Activated naive CD8-positive, alpha-beta T cell treated with anti-CD3 and anti-CD28 coated beads, Interleukin-2, amount 10 ng/mL, durations not matched to agents 7 days and 5 days (primary cell): ENCODE measurements at regions of chr7 and their contacts with region 1.

Region 1: GRCh38 chr7:114922016-114922651 is at the start of gene MDFIC:
- DNase-seq: peak; percentile 77
- ATAC-seq: peak; percentile 57
- H3K4me3 Mint-ChIP-seq: peak within 1 kb of the TSS; percentile 98
- H3K27ac Mint-ChIP-seq: peak within 1 kb of the TSS; percentile 96
- H3K4me1 Mint-ChIP-seq: peaks cover 31% of the 10 kb centered on the region
- H3K27me3 Mint-ChIP-seq: no peaks in the 10 kb centered on the region
- total RNA-seq, gene MDFIC: 50.8 to 57.0 TPM

Region 2: DNA sequence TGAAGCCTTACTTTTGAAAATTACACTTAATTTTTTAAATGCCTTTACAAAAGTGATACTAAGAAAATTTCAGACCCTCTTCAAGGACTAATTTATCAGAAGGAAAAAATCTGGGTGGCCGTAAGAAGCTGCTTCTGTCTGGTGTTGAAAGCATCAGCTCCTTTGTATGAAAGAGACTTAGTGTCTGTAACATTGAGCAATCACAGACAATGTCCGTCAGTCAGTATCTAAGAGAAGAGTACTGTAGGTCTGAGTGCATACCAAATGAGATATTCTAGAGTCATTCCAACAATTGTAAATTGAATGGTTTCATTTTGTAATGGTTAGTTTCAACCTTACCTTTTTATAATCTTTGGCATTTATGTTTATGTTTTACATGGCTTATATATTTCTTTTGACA is 11.3 kb before region 1 on chr7:
- POLR2A ChIA-PET with region 1: no interaction called
- DNase-seq: no peak
- ATAC-seq: no peak
- H3K4me3 Mint-ChIP-seq: no peak overlapping the region
- H3K27ac Mint-ChIP-seq: no peak overlapping the region
- H3K4me1 Mint-ChIP-seq: peaks cover 3% of the 10 kb centered on the region
- H3K27me3 Mint-ChIP-seq: peaks cover 2% of the 10 kb centered on the region

Region 3: GRCh38 chr7:114997487-114998404 is 75.6 kb after region 1 on chr7:
- POLR2A ChIA-PET with region 1: interaction called, 10 read pairs
- DNase-seq: no peak
- ATAC-seq: peak; percentile 52
- H3K4me3 Mint-ChIP-seq: peak overlapping the region; percentile 12
- H3K27ac Mint-ChIP-seq: peak overlapping the region; percentile 54
- H3K4me1 Mint-ChIP-seq: peaks cover 28% of the 10 kb centered on the region
- H3K27me3 Mint-ChIP-seq: no peaks in the 10 kb centered on the region

Region 4: DNA sequence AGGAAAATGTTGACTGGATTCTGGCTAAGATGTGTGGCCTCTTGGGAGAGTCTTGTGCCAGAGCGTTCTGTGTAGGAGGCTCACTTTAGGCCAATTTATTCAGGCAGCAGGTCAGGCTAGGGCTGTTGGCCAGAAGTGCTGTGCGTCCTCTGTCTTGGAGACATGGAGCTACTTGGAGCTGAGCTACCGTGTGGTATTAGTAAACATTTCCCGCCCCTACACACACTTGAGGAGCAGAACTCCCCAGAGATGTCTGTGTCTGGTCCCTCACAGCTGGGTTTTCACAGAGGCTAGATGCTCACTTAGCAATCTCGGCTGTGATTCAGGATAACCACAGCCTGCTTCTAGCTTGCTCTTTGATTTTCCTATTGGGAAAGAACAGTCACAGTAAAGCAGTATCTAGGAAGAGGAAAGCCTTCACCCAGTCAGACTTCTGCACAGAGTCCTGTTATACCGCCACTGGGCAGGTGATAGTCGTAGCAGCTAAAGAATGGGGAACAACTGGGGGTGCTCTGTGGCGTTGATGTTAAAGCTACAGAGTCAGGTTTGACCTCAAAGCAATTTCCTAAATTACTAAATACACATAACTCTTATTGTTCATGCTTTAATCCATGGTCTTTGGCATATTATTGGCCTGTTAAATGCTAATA is 86.5 kb after region 1 on chr7:
- POLR2A ChIA-PET with region 1: interaction called, 54 read pairs
- DNase-seq: peak; percentile 36
- ATAC-seq: peak; percentile 65
- H3K4me3 Mint-ChIP-seq: peak overlapping the region; percentile 80
- H3K27ac Mint-ChIP-seq: peak overlapping the region; percentile 95
- H3K4me1 Mint-ChIP-seq: peaks cover 58% of the 10 kb centered on the region
- H3K27me3 Mint-ChIP-seq: no peaks in the 10 kb centered on the region